Caco-2 (cell line): ENCODE measurements at regions of chr17 and their contacts with region 1.

Region 1: GRCh38 chr17:66567234-66568170 is 265.1 kb downstream of the PRKCA start:
- DNase-seq: peak; percentile 85 to 90
- H3K4me3 ChIP-seq: no peak overlapping the region
- H3K4me3 Mint-ChIP-seq: no peak overlapping the region
- H3K27ac Mint-ChIP-seq: no peak overlapping the region
- H3K4me1 ChIP-seq: 0 out of 2 replicates have a peak, but pooled peaks cover 11% of the 10 kb centered on the region
- H3K4me1 Mint-ChIP-seq: peaks cover 8% of the 10 kb centered on the region
- H3K27me3 ChIP-seq: no peaks in the 10 kb centered on the region
- H3K27me3 Mint-ChIP-seq: no peaks in the 10 kb centered on the region
- CTCF ChIP-seq: peak; percentile 84 to 93

Region 2: GRCh38 chr17:66200685-66201092 is 366.8 kb before region 1 on chr17:
- CTCF ChIA-PET with region 1: interaction called, 4 read pairs
- POLR2A ChIA-PET with region 1: no interaction called
- intact Hi-C with region 1: loop called (anchors 1 kb)
- DNase-seq: peak; percentile 77 to 79
- H3K4me3 ChIP-seq: no peak overlapping the region
- H3K4me3 Mint-ChIP-seq: no peak overlapping the region
- H3K27ac Mint-ChIP-seq: peak overlapping the region; percentile 27
- H3K4me1 ChIP-seq: peaks cover 5% of the 10 kb centered on the region
- H3K4me1 Mint-ChIP-seq: peaks cover 7% of the 10 kb centered on the region
- H3K27me3 ChIP-seq: no peaks in the 10 kb centered on the region
- H3K27me3 Mint-ChIP-seq: no peaks in the 10 kb centered on the region
- CTCF ChIP-seq: peak; percentile 80 to 83

Region 3: GRCh38 chr17:66290101-66290722 is 277.3 kb before region 1 on chr17:
- CTCF ChIA-PET with region 1: interaction called, 3 read pairs
- POLR2A ChIA-PET with region 1: no interaction called
- intact Hi-C with region 1: loop called (anchors 1 kb)
- DNase-seq: peak in 1 of 2 experiments; percentile 36
- H3K4me3 ChIP-seq: no peak overlapping the region
- H3K4me3 Mint-ChIP-seq: no peak overlapping the region
- H3K27ac Mint-ChIP-seq: no peak overlapping the region
- H3K4me1 ChIP-seq: 0 out of 2 replicates have a peak, but pooled peaks cover 5% of the 10 kb centered on the region
- H3K4me1 Mint-ChIP-seq: no peaks in the 10 kb centered on the region
- H3K27me3 ChIP-seq: no peaks in the 10 kb centered on the region
- H3K27me3 Mint-ChIP-seq: no peaks in the 10 kb centered on the region
- CTCF ChIP-seq: peak in 1 of 2 experiments; percentile 20

Region 4: GRCh38 chr17:66426397-66427033 is 141.0 kb before region 1 on chr17:
- CTCF ChIA-PET with region 1: no interaction called
- POLR2A ChIA-PET with region 1: no interaction called
- intact Hi-C with region 1: loop called (anchors 1 kb)
- DNase-seq: peak; percentile 47 to 64
- H3K4me3 ChIP-seq: no peak overlapping the region
- H3K4me3 Mint-ChIP-seq: no peak overlapping the region
- H3K27ac Mint-ChIP-seq: peak overlapping the region; percentile 5
- H3K4me1 ChIP-seq: peaks cover 21% of the 10 kb centered on the region
- H3K4me1 Mint-ChIP-seq: peaks cover 15% of the 10 kb centered on the region
- H3K27me3 ChIP-seq: no peaks in the 10 kb centered on the region
- H3K27me3 Mint-ChIP-seq: no peaks in the 10 kb centered on the region
- CTCF ChIP-seq: peak; percentile 34 to 39

Region 5: DNA sequence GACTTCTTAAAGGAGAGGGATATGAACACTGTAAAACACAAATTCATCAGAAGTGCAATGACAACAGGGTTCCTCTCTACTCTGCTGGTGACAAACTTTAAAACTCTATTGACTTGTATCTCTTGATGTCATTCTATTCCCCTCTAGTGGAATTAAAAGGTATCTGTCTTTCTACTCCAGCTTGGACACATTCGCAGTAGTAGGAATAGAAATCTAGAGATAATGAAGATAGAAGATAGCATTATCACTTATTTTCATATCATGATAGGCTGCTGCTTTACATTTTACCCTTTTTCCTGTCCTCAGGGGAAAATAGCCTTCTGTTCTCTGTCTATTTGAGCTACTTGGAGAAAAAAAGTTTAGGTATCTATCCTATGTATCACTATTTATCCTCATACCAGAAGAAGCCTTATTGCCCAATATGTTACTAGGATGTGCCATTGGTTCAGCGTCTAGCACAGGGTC is 57.8 kb after region 1 on chr17:
- CTCF ChIA-PET with region 1: no interaction called
- POLR2A ChIA-PET with region 1: no interaction called
- intact Hi-C with region 1: loop called (anchors 10 kb)
- DNase-seq: no peak
- H3K4me3 ChIP-seq: no peak overlapping the region
- H3K4me3 Mint-ChIP-seq: no peak overlapping the region
- H3K27ac Mint-ChIP-seq: no peak overlapping the region
- H3K4me1 ChIP-seq: peaks cover 12% of the 10 kb centered on the region; the same call in 1 of the 2 replicates
- H3K4me1 Mint-ChIP-seq: peaks cover 16% of the 10 kb centered on the region
- H3K27me3 ChIP-seq: no peaks in the 10 kb centered on the region
- H3K27me3 Mint-ChIP-seq: no peaks in the 10 kb centered on the region
- CTCF ChIP-seq: peak; percentile 53 to 54

Region 6: GRCh38 chr17:66643815-66644702 is 76.6 kb after region 1 on chr17:
- CTCF ChIA-PET with region 1: no interaction called
- POLR2A ChIA-PET with region 1: no interaction called
- intact Hi-C with region 1: no loop called
- DNase-seq: no peak
- H3K4me3 ChIP-seq: no peak overlapping the region
- H3K4me3 Mint-ChIP-seq: no peak overlapping the region
- H3K27ac Mint-ChIP-seq: no peak overlapping the region
- H3K4me1 ChIP-seq: peaks cover 15% of the 10 kb centered on the region; the same call in 1 of the 2 replicates
- H3K4me1 Mint-ChIP-seq: peaks cover 10% of the 10 kb centered on the region
- H3K27me3 ChIP-seq: no peaks in the 10 kb centered on the region
- H3K27me3 Mint-ChIP-seq: no peaks in the 10 kb centered on the region
- CTCF ChIP-seq: no peak